GM12878 (cell line): ENCODE measurements at regions of chr15 and their contacts with region 1.

Region 1: GRCh38 chr15:63238796-63239195 is 38.6 kb upstream of the APH1B start:
- DNase-seq: peak; percentile 50
- ATAC-seq: peak; percentile 95
- H3K4me3 ChIP-seq: no peak overlapping the region
- H3K27ac ChIP-seq: no peak overlapping the region
- H3K4me1 ChIP-seq: peaks cover 18% of the 10 kb centered on the region
- H3K27me3 ChIP-seq: no peaks in the 10 kb centered on the region
- CTCF ChIP-seq: no peak
- EP300 ChIP-seq: no peak
- POLR2A ChIP-seq: no peak
- RAD21 ChIP-seq: no peak

Region 2: DNA sequence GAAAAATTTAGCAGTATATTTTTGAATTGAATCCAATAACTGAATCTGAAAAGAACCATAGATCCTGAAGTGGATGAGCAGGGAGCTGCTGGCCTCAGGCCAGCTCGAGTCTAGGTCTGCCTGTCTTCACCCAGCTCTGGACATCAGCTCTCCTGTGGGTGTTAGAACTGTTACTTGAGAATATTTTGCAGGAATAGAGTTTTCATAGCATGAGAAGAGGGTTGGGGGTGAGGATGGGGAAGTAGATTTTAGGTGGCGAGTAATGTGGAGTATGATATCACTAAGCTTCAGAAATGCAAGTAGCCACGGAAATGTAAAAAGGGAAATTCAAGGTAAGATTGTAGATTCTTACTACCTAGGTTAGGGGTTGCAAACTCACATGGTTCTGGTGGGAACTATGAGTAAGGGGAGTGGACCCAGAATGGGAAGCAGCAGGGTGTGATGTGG is 43.2 kb before region 1 on chr15:
- CTCF ChIA-PET with region 1: interaction called, 7 read pairs
- POLR2A ChIA-PET with region 1: interaction called, 14 read pairs
- RAD21 ChIA-PET with region 1: interaction called, 38 read pairs
- SMC1A ChIA-PET with region 1: interaction called, 88 read pairs
- in situ Hi-C with region 1: no loop called
- intact Hi-C with region 1: loop called (anchors 5 kb)
- DNase-seq: no peak
- ATAC-seq: peak; percentile 2; the same call in 1 of the 3 replicates
- H3K4me3 ChIP-seq: peak overlapping the region; percentile 96; the same call in 1 of the 2 replicates
- H3K27ac ChIP-seq: peak overlapping the region; percentile 51
- H3K4me1 ChIP-seq: peaks cover 40% of the 10 kb centered on the region
- H3K27me3 ChIP-seq: no peaks in the 10 kb centered on the region
- CTCF ChIP-seq: no peak
- EP300 ChIP-seq: no peak
- POLR2A ChIP-seq: no peak
- RAD21 ChIP-seq: no peak

Region 3: DNA sequence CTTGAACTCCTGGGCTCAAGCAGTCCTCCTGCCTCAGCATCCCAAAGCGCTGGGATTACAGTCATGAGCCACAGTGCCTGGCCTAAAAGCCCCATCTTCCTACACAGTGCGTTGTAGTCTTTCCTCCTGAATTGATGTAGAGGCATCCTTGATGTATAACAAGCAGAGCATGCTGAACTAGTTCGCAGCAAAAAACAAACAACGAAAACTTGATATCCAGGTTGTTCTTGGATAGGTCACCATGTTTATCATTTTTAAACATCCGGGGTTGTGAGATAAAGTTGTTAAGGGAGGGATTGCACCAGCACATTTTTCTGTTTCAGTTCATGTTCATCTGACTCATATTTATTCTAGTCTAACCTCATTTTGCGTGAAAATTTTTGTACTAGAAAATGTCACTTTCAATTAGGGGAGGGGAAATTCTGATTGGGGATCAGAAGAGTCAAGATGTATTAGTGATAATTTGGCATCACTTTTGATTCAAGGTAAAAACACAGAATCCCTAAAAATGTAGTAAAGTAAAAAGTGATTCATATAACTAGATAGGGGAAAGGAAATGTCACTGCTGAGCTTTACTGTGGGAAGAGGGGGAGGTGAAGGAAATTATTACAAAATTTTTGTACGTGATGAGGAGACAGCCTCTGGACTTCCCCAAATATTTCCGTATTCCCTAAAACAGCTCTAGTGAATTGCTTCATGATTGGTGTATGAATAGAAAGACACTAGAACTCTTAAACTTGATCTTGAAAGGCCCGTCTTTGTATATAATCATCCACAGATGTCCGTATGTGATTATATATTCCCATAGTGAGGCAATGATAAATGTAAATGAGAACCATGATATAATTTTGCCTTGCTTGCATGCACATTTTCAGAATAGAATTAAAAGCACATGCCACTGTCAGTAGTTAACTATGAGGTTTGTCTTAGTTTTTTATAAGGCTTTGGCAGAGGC is 26.5 kb before region 1 on chr15:
- CTCF ChIA-PET with region 1: interaction called, 12 read pairs
- POLR2A ChIA-PET with region 1: interaction called, 5 read pairs
- RAD21 ChIA-PET with region 1: interaction called, 6 read pairs
- SMC1A ChIA-PET with region 1: interaction called, 28 read pairs
- in situ Hi-C with region 1: no loop called
- intact Hi-C with region 1: no loop called
- DNase-seq: peak; percentile 59
- ATAC-seq: peak; percentile 70
- H3K4me3 ChIP-seq: peak overlapping the region; percentile 62
- H3K27ac ChIP-seq: peak overlapping the region; percentile 87
- H3K4me1 ChIP-seq: peaks cover 46% of the 10 kb centered on the region
- H3K27me3 ChIP-seq: no peaks in the 10 kb centered on the region
- CTCF ChIP-seq: no peak
- EP300 ChIP-seq: peak; percentile 75 to 87
- POLR2A ChIP-seq: no peak
- RAD21 ChIP-seq: no peak

Region 4: DNA sequence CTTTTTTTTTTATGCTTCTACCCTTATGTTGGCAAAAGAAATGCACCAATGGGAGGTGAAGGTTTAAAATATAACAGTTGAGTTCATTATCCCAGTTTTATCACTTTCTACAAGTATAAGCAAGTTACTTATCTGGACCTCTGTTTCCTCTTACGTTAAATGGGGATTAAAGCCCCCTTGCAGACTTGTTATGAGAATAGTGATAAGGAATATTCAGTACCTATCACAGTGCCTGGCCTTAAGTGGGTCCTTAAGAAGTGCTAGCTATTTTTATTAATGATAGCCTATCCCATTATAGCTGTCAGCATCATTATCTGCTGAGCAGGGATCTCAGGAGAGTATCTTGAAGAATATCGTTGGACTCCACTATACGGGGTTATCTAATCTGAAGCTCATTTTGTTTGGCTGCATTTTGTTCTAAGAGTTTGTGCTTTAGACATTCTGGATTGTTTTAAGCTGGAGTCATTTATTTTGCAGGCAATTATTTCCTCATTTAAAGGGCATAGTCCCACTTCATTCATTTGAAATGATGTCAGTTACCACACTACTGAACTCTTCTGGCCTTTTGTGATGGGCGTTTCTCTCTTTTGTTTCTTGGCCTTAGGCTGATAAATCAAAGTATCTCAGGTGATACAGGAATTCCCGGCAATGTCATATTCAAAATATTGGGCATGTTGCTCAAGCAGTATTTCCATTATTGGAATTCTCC is 20.5 kb before region 1 on chr15:
- CTCF ChIA-PET with region 1: interaction called, 12 read pairs
- POLR2A ChIA-PET with region 1: interaction called, 4 read pairs
- RAD21 ChIA-PET with region 1: interaction called, 6 read pairs
- SMC1A ChIA-PET with region 1: interaction called, 28 read pairs
- in situ Hi-C with region 1: no loop called
- intact Hi-C with region 1: no loop called
- DNase-seq: no peak
- ATAC-seq: no peak
- H3K4me3 ChIP-seq: no peak overlapping the region
- H3K27ac ChIP-seq: no peak overlapping the region
- H3K4me1 ChIP-seq: peaks cover 20% of the 10 kb centered on the region
- H3K27me3 ChIP-seq: no peaks in the 10 kb centered on the region
- CTCF ChIP-seq: no peak
- EP300 ChIP-seq: no peak
- POLR2A ChIP-seq: no peak
- RAD21 ChIP-seq: no peak

Region 5: DNA sequence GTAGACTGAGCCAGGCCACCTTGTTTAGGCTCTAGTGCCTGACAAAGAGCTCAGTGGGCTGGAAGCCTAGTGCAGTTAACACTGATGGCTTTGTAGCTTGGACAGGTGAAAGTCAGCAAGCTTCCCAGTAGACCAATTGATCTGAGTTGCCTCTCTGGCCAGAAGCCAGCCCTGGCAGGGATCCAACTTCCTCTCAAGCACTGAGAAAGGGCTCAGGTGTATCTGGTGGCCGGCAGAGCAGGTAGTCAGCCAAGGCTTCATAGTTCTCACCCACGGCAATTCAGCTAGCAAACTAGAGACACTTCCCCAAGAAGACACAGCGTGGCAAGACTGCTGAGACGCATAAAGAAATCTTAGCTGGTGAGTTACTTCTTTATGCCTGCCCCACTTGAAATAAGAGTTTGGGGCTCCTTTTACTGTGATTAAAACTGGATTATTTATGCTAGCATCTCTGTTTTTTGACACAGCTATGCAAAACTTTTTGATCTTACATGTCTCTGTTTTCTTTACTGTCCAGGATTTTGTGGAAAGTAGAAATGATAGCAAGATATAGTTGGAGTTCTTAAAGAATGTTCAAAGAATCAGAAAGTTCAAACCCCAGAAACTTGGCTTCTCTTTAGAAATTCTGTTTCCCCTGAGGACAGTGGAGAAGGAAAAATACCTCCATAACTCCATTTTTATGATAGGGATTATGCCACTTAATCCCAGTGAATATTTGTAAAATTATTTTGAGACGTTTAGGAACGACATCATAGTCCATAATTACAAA is 151.3 kb after region 1 on chr15:
- CTCF ChIA-PET with region 1: no interaction called
- POLR2A ChIA-PET with region 1: no interaction called
- RAD21 ChIA-PET with region 1: no interaction called
- SMC1A ChIA-PET with region 1: no interaction called
- in situ Hi-C with region 1: no loop called
- intact Hi-C with region 1: no loop called
- DNase-seq: no peak
- ATAC-seq: no peak
- H3K4me3 ChIP-seq: no peak overlapping the region
- H3K27ac ChIP-seq: no peak overlapping the region
- H3K4me1 ChIP-seq: no peaks in the 10 kb centered on the region
- H3K27me3 ChIP-seq: no peaks in the 10 kb centered on the region; a peak in 2 of 4 replicates
- CTCF ChIP-seq: no peak
- EP300 ChIP-seq: no peak
- POLR2A ChIP-seq: no peak
- RAD21 ChIP-seq: no peak

Region 6: GRCh38 chr15:63587527-63587926 is 348.7 kb after region 1 on chr15:
- CTCF ChIA-PET with region 1: no interaction called
- POLR2A ChIA-PET with region 1: no interaction called
- RAD21 ChIA-PET with region 1: no interaction called
- SMC1A ChIA-PET with region 1: no interaction called
- in situ Hi-C with region 1: no loop called
- intact Hi-C with region 1: no loop called
- DNase-seq: no peak
- ATAC-seq: no peak
- H3K4me3 ChIP-seq: no peak overlapping the region
- H3K27ac ChIP-seq: no peak overlapping the region
- H3K4me1 ChIP-seq: peaks cover 12% of the 10 kb centered on the region
- H3K27me3 ChIP-seq: no peaks in the 10 kb centered on the region
- CTCF ChIP-seq: no peak
- EP300 ChIP-seq: no peak
- POLR2A ChIP-seq: no peak
- RAD21 ChIP-seq: no peak